CD4-positive, alpha-beta T cell (primary cell): ENCODE measurements at regions of chr6 and their contacts with region 1.

Region 1: GRCh38 chr6:33276864-33277662 is at the start of gene B3GALT4:
- DNase-seq: peak in 13 of 14 experiments; percentile 45 to 89 (median 64)
- ATAC-seq: peak; percentile 68
- H3K4me3 ChIP-seq: peak within 1 kb of the TSS; percentile 96
- H3K4me3 Mint-ChIP-seq: peak within 1 kb of the TSS; percentile 93
- H3K27ac ChIP-seq: peak within 1 kb of the TSS; percentile 82 to 90
- H3K27ac Mint-ChIP-seq: peak within 1 kb of the TSS; percentile 97
- H3K4me1 ChIP-seq: peaks cover 83% of the 10 kb centered on the region
- H3K4me1 Mint-ChIP-seq: peaks cover 67% of the 10 kb centered on the region
- H3K27me3 ChIP-seq: no peaks in the 10 kb centered on the region
- H3K27me3 Mint-ChIP-seq: no peaks in the 10 kb centered on the region
- CTCF ChIP-seq: peak; percentile 36
- total RNA-seq, gene B3GALT4: 11.1 to 12.7 TPM

Region 2: GRCh38 chr6:33288921-33289748 is 12.1 kb after region 1 on chr6 and contains the starts of genes PFDN6 and WDR46:
- CTCF ChIA-PET with region 1: interaction called, 14 read pairs
- POLR2A ChIA-PET with region 1: interaction called, 105 read pairs
- intact Hi-C with region 1: loop called in 1 of 2 experiments (anchors 1 kb)
- DNase-seq: peak; percentile 62 to 92 (median 76)
- ATAC-seq: peak; percentile 97
- H3K4me3 ChIP-seq: peak within 1 kb of the TSS; percentile 80
- H3K4me3 Mint-ChIP-seq: peak within 1 kb of the TSS; percentile 97
- H3K27ac ChIP-seq: peak within 1 kb of the TSS; percentile 71 to 83
- H3K27ac Mint-ChIP-seq: peak within 1 kb of the TSS; percentile 83
- H3K4me1 ChIP-seq: peaks cover 39% of the 10 kb centered on the region
- H3K4me1 Mint-ChIP-seq: peaks cover 45% of the 10 kb centered on the region
- H3K27me3 ChIP-seq: no peaks in the 10 kb centered on the region
- H3K27me3 Mint-ChIP-seq: no peaks in the 10 kb centered on the region
- CTCF ChIP-seq: no peak
- total RNA-seq, gene PFDN6: 9.7 to 11.7 TPM
- total RNA-seq, gene WDR46: 13.6 to 15.8 TPM

Region 3: DNA sequence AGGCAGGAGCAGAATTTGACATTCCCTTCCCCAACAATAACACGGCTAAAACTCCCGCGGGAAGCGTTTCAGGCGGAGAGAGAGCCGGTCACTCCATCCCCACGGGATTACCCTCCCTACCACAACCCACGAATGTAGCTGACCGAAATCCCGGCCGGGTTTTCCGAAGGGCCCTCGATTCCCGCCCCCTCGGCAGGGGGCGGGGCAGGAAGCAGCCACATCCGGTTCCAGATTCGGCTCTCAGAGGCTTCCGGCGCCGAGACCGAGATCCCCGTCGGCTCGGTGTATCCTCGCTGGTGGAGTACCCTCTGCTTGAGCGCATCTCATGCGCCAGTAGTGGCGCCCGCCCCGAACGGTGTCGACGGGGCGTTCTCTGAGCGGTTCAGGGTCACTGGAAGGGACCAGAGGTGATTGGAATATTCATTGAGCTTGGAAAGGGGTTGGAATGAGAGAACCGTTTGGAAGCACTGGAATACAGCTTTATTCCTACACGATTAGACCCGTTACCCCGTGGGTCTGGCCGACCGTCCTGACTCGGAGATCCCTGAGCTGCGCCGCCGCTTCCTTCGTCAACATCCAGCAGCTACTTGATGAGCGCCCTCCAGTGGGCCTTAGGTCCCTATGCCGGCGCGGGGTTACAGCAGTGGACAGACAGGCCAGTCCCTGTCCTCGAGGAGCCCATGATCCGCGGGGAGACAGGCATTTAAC is 22.3 kb after region 1 on chr6:
- CTCF ChIA-PET with region 1: interaction called, 22 read pairs
- POLR2A ChIA-PET with region 1: interaction called, 80 read pairs
- intact Hi-C with region 1: loop called in 1 of 2 experiments (anchors 2 kb)
- DNase-seq: peak; percentile 89 to 97 (median 92)
- ATAC-seq: peak; percentile 84
- H3K4me3 ChIP-seq: peak overlapping the region; percentile 91
- H3K4me3 Mint-ChIP-seq: peak overlapping the region; percentile 98
- H3K27ac ChIP-seq: peak overlapping the region; percentile 90 to 96
- H3K27ac Mint-ChIP-seq: peak overlapping the region; percentile 99
- H3K4me1 ChIP-seq: peaks cover 34% of the 10 kb centered on the region
- H3K4me1 Mint-ChIP-seq: peaks cover 32% of the 10 kb centered on the region
- H3K27me3 ChIP-seq: no peaks in the 10 kb centered on the region
- H3K27me3 Mint-ChIP-seq: no peaks in the 10 kb centered on the region
- CTCF ChIP-seq: peak; percentile 74

Region 4: GRCh38 chr6:33410050-33410710 is 133.1 kb after region 1 on chr6:
- CTCF ChIA-PET with region 1: interaction called, 3 read pairs
- POLR2A ChIA-PET with region 1: interaction called, 5 read pairs
- intact Hi-C with region 1: loop called in 1 of 2 experiments (anchors 5 kb)
- DNase-seq: peak; percentile 92 to 99 (median 98)
- ATAC-seq: peak; percentile 71
- H3K4me3 ChIP-seq: peak overlapping the region; percentile 81
- H3K4me3 Mint-ChIP-seq: peak overlapping the region; percentile 95
- H3K27ac ChIP-seq: peak overlapping the region; percentile 95 to 99
- H3K27ac Mint-ChIP-seq: peak overlapping the region; percentile 98
- H3K4me1 ChIP-seq: peaks cover 64% of the 10 kb centered on the region
- H3K4me1 Mint-ChIP-seq: peaks cover 57% of the 10 kb centered on the region
- H3K27me3 ChIP-seq: no peaks in the 10 kb centered on the region
- H3K27me3 Mint-ChIP-seq: no peaks in the 10 kb centered on the region
- CTCF ChIP-seq: no peak